ENCODE measurements at regions of chr10 and their contacts with region 1.

Region 1: DNA sequence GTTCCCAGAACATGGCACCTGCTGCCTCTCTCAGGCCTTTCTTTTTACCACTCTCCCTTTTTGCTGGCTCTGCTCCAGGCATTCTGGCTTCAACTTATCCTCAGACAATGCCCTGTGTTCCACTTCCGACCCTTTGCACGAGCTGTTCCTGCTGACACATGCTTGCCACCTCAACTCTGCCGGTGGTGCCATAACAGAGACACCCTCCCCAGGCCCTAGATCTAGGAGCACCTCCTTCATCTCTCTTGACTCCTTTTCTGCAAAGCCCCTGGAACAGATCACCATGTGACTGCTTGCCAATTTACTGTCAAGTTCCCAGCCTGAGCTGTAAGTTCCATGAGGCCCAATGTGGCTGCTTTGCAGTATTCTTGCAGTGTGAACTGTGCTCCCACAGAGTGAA is 256.0 kb upstream of the MKI67 start:
- DNase-seq: no peak
- H3K4me3 ChIP-seq: no peak overlapping the region
- H3K27ac ChIP-seq: no peak overlapping the region
- H3K4me1 ChIP-seq: no peaks in the 10 kb centered on the region
- H3K27me3 ChIP-seq: no peaks in the 10 kb centered on the region
- CTCF ChIP-seq: no peak
- POLR2A ChIP-seq: no peak

Region 2: DNA sequence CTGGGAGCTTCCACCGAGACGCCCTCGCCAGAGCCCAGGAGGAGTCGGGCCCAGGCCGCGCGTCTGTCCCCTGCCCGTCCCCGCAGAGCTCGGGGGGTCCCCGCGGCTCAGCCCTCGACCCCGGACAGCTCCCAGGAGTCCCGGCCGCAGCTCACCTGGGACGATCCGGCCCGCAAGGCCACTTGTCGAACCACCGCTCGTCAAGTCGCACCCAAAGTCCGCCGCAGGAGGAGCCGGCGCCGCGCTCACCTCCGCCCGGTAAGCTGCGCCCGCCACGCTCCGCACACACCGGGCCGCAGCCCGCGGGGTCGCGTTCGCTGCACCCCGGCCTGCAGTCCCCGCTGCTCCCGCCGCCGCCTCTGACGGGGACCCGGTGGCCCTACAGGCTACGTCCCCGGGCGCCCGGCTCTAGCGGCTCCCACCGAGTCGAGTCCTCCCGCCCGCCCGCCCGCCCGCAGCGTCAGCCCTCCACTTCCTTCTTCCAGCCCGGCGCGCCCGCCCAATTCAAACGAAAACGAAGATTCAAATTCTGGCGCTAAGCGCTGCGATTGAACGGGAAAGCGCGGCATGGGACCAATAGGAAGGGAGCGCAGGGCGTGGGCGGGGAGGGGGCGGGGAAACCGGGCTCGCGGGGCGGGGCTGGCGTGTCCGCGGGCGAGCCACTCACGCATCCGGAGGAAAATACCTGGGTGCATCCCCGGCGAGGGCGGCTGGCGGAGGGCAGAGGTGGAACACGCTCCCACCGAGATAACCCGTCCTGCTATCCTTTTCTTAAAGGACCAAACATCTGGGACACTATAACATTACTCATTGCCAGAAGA is 256.1 kb before region 1 on chr10 and contains the start of gene MKI67:
- intact Hi-C with region 1: no loop called
- DNase-seq: peak; percentile 67 to 79
- H3K4me3 ChIP-seq: peak within 1 kb of the TSS; percentile 49 to 73 (median 63)
- H3K27ac ChIP-seq: no peak within 1 kb of the TSS
- H3K4me1 ChIP-seq: peaks cover 4 to 8% of the 10 kb centered on the region in 2 donors
- H3K27me3 ChIP-seq: peaks cover 0 to 33% of the 10 kb centered on the region in 2 donors
- CTCF ChIP-seq: no peak
- POLR2A ChIP-seq: no peak
- total RNA-seq, gene MKI67: 0.29 to 6.4 (median 0.33) TPM

Region 3: DNA sequence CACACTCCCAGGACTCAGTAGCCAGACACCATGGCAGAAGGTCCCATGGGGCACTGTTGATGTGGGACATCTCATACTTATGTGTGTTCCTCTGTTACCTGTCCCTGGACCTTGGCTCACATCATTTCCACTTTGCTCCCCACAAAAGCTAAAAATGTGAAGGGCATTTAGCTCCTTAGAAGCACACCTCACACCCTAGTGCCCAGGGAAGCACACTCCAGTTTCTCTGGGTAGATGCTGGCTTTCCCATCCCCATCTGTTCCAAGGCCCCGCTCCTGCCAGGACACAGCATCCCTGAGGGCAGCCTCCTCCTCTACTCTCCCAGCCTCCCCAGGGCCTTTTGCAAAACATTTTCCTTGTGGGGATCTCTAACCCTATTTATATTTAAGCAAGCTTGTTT is 512.4 kb after region 1 on chr10:
- intact Hi-C with region 1: loop called (anchors 5 kb)
- DNase-seq: no peak
- H3K4me3 ChIP-seq: no peak overlapping the region
- H3K27ac ChIP-seq: no peak overlapping the region
- H3K4me1 ChIP-seq: no peaks in the 10 kb centered on the region
- H3K27me3 ChIP-seq: no peaks in the 10 kb centered on the region
- CTCF ChIP-seq: no peak
- POLR2A ChIP-seq: no peak

Measured in breast epithelium (tissue), 4 donors.